ENCODE measurements at regions of chr5 and their contacts with region 1.

Region 1: DNA sequence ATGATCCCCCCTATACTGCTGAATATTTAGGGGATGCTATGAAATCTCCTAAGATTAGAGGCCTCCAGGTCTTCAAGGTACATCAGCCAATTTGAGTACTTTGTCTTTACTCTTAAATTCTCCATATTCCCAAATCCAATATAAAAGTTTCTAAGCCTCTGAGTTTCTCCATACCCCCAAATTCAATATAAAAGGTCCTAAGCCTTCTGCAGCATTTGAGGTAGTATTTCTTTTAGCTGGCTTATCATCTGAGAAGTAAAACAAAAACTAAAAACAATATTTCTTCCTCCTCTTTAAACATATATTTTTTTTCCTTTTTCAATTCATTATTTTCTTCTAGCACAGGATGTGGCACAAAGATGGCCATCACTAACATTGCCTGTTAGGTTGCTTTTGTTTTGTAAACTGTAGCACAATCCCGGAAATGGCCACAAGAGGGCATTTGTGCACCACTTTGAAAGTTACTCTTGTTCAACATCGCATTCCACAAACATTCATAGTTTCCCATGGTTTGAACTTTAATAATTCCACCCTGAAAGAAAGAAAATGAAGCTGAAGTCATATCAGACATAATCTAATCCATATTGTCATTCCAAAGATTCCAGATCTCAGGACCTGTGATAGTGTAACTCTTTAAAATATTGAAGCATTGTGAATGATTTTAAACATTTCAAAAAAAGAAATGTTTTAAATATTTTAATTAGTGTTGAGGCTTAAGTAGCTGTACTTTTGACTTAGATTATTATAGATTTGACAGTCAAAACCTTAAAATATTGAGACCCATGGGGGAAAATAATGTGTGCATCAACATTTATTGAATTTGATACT is 21.0 kb upstream of the SCGB3A2 start:
- DNase-seq: peak; percentile 76
- H3K4me3 Mint-ChIP-seq: no peak overlapping the region
- H3K27ac Mint-ChIP-seq: no peak overlapping the region
- H3K4me1 Mint-ChIP-seq: peaks cover 57% of the 10 kb centered on the region
- H3K27me3 Mint-ChIP-seq: no peaks in the 10 kb centered on the region
- CTCF ChIP-seq: peak; percentile 70

Region 2: DNA sequence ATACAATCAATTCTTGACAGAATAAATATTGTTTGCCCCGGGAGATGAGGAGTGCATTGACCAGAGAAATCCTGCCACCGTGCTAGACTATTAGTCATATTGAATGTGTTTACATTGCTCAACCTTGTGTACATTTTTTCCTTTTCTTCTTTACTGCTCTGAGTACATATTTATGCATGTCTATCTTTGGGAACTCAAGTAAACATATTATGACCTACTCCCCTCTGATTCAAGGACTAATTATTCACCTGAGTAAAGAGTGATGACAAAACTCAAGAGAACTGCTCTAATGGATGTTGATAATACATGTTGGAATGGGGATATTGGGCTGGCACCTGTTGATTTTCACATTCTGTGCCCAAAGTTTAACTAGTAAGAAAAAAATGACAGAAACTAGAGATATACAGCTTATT is 22.1 kb before region 1 on chr5:
- CTCF ChIA-PET with region 1: interaction called, 5 read pairs
- intact Hi-C with region 1: loop called (anchors 2 kb)
- DNase-seq: peak; percentile 52
- H3K4me3 Mint-ChIP-seq: peak overlapping the region; percentile 41
- H3K27ac Mint-ChIP-seq: peak overlapping the region; percentile 96
- H3K4me1 Mint-ChIP-seq: peaks cover 69% of the 10 kb centered on the region
- H3K27me3 Mint-ChIP-seq: no peaks in the 10 kb centered on the region
- CTCF ChIP-seq: no peak

Region 3: GRCh38 chr5:147887024-147887627 is 29.6 kb after region 1 on chr5:
- CTCF ChIA-PET with region 1: interaction called, 12 read pairs
- intact Hi-C with region 1: loop called (anchors 2 kb)
- DNase-seq: peak; percentile 56
- H3K4me3 Mint-ChIP-seq: no peak overlapping the region
- H3K27ac Mint-ChIP-seq: no peak overlapping the region
- H3K4me1 Mint-ChIP-seq: peaks cover 22% of the 10 kb centered on the region
- H3K27me3 Mint-ChIP-seq: no peaks in the 10 kb centered on the region
- CTCF ChIP-seq: peak; percentile 63

Region 4: GRCh38 chr5:147935032-147935431 is 77.5 kb after region 1 on chr5:
- CTCF ChIA-PET with region 1: interaction called, 16 read pairs
- intact Hi-C with region 1: loop called (anchors 1 kb)
- DNase-seq: peak; percentile 58
- H3K4me3 Mint-ChIP-seq: no peak overlapping the region
- H3K27ac Mint-ChIP-seq: no peak overlapping the region
- H3K4me1 Mint-ChIP-seq: no peaks in the 10 kb centered on the region
- H3K27me3 Mint-ChIP-seq: no peaks in the 10 kb centered on the region
- CTCF ChIP-seq: peak; percentile 66

Region 5: GRCh38 chr5:148107608-148108007 is 250.1 kb after region 1 on chr5:
- CTCF ChIA-PET with region 1: no interaction called
- intact Hi-C with region 1: loop called (anchors 5 kb)
- DNase-seq: peak; percentile 20
- H3K4me3 Mint-ChIP-seq: no peak overlapping the region
- H3K27ac Mint-ChIP-seq: no peak overlapping the region
- H3K4me1 Mint-ChIP-seq: no peaks in the 10 kb centered on the region
- H3K27me3 Mint-ChIP-seq: no peaks in the 10 kb centered on the region
- CTCF ChIP-seq: no peak